Activated CD8-positive, alpha-beta T cell treated with anti-CD3 and anti-CD28 coated beads for 36 hours (primary cell): ENCODE measurements at regions of chr12 and their contacts with region 1.

Region 1: GRCh38 chr12:51874013-51874412 is 13.9 kb upstream of the ANKRD33 start:
- DNase-seq: no peak
- ATAC-seq: no peak
- H3K4me3 Mint-ChIP-seq: no peak overlapping the region
- H3K27ac Mint-ChIP-seq: no peak overlapping the region
- H3K4me1 Mint-ChIP-seq: peaks cover 11% of the 10 kb centered on the region
- H3K27me3 Mint-ChIP-seq: peaks cover 16% of the 10 kb centered on the region
- CTCF ChIP-seq: no peak

Region 2: GRCh38 chr12:51771008-51771407 is 103.0 kb before region 1 on chr12:
- CTCF ChIA-PET with region 1: no interaction called
- POLR2A ChIA-PET with region 1: no interaction called
- intact Hi-C with region 1: no loop called
- DNase-seq: no peak
- ATAC-seq: no peak
- H3K4me3 Mint-ChIP-seq: no peak overlapping the region
- H3K27ac Mint-ChIP-seq: no peak overlapping the region
- H3K4me1 Mint-ChIP-seq: peaks cover 3% of the 10 kb centered on the region
- H3K27me3 Mint-ChIP-seq: no peaks in the 10 kb centered on the region
- CTCF ChIP-seq: no peak

Region 3: GRCh38 chr12:51832354-51833107 is 41.5 kb before region 1 on chr12:
- CTCF ChIA-PET with region 1: interaction called, 10 read pairs
- POLR2A ChIA-PET with region 1: interaction called, 3 read pairs
- intact Hi-C with region 1: no loop called
- DNase-seq: no peak
- ATAC-seq: no peak
- H3K4me3 Mint-ChIP-seq: no peak overlapping the region
- H3K27ac Mint-ChIP-seq: no peak overlapping the region
- H3K4me1 Mint-ChIP-seq: peaks cover 21% of the 10 kb centered on the region
- H3K27me3 Mint-ChIP-seq: peaks cover 23% of the 10 kb centered on the region
- CTCF ChIP-seq: no peak

Region 4: GRCh38 chr12:51886021-51886322 is 12.0 kb after region 1 on chr12:
- CTCF ChIA-PET with region 1: interaction called, 21 read pairs
- POLR2A ChIA-PET with region 1: interaction called, 3 read pairs
- intact Hi-C with region 1: no loop called
- DNase-seq: peak; percentile 67
- ATAC-seq: peak; percentile 95
- H3K4me3 Mint-ChIP-seq: peak overlapping the region; percentile 9
- H3K27ac Mint-ChIP-seq: peak overlapping the region; percentile 83
- H3K4me1 Mint-ChIP-seq: peaks cover 15% of the 10 kb centered on the region
- H3K27me3 Mint-ChIP-seq: peaks cover 1% of the 10 kb centered on the region
- CTCF ChIP-seq: no peak

Region 5: DNA sequence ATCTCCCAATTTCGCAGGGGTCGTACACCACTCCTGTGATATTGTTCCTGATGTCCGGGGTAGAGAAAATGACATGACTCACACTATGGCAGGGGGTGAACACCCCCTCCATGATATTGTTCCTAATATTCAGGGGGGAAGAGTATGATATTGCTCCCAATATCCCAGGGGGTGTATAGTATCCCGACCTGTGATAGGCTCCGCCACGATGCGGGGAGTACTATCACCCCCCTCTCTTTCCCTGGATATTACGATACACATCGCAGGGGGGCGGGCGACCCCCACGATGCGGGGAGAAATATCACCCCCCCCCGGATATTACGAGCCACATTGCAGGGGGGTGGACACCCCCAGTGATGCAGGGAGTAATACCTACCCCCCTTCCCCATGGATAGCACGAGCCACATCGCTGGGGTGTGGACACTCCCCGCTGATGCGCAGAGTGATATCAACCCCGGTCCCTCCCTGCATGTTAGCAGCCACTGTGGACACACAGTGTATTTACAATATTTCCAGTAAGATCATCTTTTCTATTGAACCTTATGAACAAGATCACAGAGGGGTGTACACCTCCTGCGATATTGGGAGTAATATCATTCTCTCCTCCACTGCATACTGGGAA is 223.1 kb after region 1 on chr12:
- CTCF ChIA-PET with region 1: no interaction called
- POLR2A ChIA-PET with region 1: no interaction called
- intact Hi-C with region 1: no loop called
- DNase-seq: no peak
- ATAC-seq: peak; percentile 60
- H3K4me3 Mint-ChIP-seq: no peak overlapping the region
- H3K27ac Mint-ChIP-seq: no peak overlapping the region
- H3K4me1 Mint-ChIP-seq: no peaks in the 10 kb centered on the region
- H3K27me3 Mint-ChIP-seq: peaks cover 21% of the 10 kb centered on the region
- CTCF ChIP-seq: no peak